Sigmoid colon (tissue), 7 donors: ENCODE measurements at regions of chr9 and their contacts with region 1.

Region 1: DNA sequence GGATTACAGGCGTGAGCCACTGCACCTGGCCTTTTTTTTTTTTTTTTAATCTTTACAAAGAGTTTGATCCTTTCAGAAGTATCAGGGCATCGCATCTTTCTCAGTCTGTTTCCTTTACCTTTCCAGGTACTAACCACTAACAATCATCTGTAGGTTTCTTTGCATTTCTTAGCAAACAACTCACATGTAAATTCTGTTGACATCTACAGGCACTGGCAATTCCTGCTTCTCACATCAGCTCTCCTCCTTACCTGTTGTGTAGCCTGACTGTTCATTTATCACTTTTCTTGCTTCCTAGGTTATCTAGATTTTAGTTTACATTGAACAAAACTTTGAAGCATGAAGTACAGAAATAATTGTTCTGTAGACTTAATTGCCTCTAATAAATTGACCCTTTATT is 27.5 kb upstream of the VPS13A start:
- DNase-seq: no peak
- H3K4me3 ChIP-seq: no peak overlapping the region
- H3K27ac ChIP-seq: no peak overlapping the region
- H3K4me1 ChIP-seq: no peaks in the 10 kb centered on the region
- H3K27me3 ChIP-seq: peaks cover 0 to 4% (median 0%) of the 10 kb centered on the region in 3 donors
- CTCF ChIP-seq: no peak
- EP300 ChIP-seq: no peak
- POLR2A ChIP-seq: no peak

Region 2: DNA sequence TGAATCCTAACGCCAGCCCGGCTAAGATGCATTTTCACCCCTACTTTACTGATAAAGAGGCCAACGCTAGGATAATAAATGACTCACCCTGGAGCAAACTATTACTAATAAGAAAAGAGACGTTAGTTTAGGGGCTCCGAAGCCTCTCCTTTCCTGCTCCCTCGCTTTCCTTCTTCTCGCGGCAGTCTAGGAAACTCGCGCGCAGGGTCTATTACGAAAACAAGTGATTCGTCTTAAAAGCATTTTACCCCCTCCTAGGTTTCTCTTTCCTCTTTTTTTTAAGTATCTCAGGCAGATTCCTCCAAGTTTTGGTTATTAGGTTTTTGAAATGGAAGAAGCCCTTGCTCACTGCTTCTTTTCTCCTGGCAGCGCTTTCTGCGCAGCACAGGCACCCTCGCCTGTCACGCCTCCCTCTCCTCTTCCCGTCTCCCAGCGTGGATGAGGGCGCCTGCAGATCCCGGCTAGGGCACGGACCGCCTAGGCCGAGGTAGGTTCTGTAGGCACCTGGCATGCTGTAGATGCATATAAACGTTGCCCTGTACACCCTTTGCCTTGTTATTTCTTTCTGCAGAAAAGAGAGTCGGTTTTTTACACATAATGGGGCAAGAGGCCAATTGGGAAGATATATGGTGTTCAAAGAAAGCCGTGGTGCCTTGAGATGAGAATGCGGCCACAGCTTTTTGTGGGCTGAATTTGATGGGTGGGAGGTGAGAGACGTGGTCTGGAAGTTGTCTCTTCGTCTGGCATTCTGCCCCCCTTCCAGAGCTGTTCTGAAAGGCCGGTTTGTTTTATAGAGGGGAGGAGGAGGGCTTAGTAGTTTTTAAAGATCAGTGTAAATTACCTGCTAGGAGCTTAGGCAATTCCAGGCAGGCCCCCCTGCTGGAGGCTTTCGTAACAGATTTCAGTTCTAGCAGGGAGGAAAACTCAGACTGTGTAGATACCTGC is 689.9 kb before region 1 on chr9:
- intact Hi-C with region 1: loop called (anchors 5 kb)
- DNase-seq: no peak
- H3K4me3 ChIP-seq: peak overlapping the region; percentile 41 to 63 (median 57)
- H3K27ac ChIP-seq: peak overlapping the region in 3 of 4 donors; percentile 12 to 52 (median 48)
- H3K4me1 ChIP-seq: peaks cover 0 to 21% (median 12%) of the 10 kb centered on the region in 4 donors
- H3K27me3 ChIP-seq: no peaks in the 10 kb centered on the region
- CTCF ChIP-seq: peak in 1 of 4 experiments; percentile 11
- EP300 ChIP-seq: no peak
- POLR2A ChIP-seq: no peak

Region 3: GRCh38 chr9:77038281-77039036 is 111.4 kb before region 1 on chr9:
- intact Hi-C with region 1: no loop called
- DNase-seq: no peak
- H3K4me3 ChIP-seq: no peak overlapping the region
- H3K27ac ChIP-seq: no peak overlapping the region
- H3K4me1 ChIP-seq: no peaks in the 10 kb centered on the region
- H3K27me3 ChIP-seq: peaks cover 0 to 12% (median 0%) of the 10 kb centered on the region in 3 donors
- CTCF ChIP-seq: no peak
- EP300 ChIP-seq: no peak
- POLR2A ChIP-seq: no peak